CD4-positive, alpha-beta T cell (primary cell): ENCODE measurements at regions of chrX and their contacts with region 1.

Region 1: GRCh38 chrX:39445336-39445735 is 644.1 kb downstream of the MID1IP1 start:
- DNase-seq: peak; percentile 2 to 67 (median 29)
- ATAC-seq: no peak
- H3K4me3 ChIP-seq: no peak overlapping the region
- H3K4me3 Mint-ChIP-seq: no peak overlapping the region
- H3K27ac ChIP-seq: no peak overlapping the region
- H3K27ac Mint-ChIP-seq: no peak overlapping the region
- H3K4me1 ChIP-seq: peaks cover 6% of the 10 kb centered on the region
- H3K4me1 Mint-ChIP-seq: peaks cover 37% of the 10 kb centered on the region
- H3K27me3 ChIP-seq: no peaks in the 10 kb centered on the region
- H3K27me3 Mint-ChIP-seq: no peaks in the 10 kb centered on the region
- CTCF ChIP-seq: no peak

Region 2: GRCh38 chrX:39261446-39262147 is 183.7 kb before region 1 on chrX:
- CTCF ChIA-PET with region 1: no interaction called
- POLR2A ChIA-PET with region 1: no interaction called
- intact Hi-C with region 1: loop called (anchors 5 kb)
- DNase-seq: peak in 7 of 14 experiments; percentile 1 to 68 (median 50)
- ATAC-seq: peak; percentile 60
- H3K4me3 ChIP-seq: no peak overlapping the region
- H3K4me3 Mint-ChIP-seq: no peak overlapping the region
- H3K27ac ChIP-seq: no peak overlapping the region
- H3K27ac Mint-ChIP-seq: no peak overlapping the region
- H3K4me1 ChIP-seq: no peaks in the 10 kb centered on the region
- H3K4me1 Mint-ChIP-seq: peaks cover 11% of the 10 kb centered on the region
- H3K27me3 ChIP-seq: no peaks in the 10 kb centered on the region
- H3K27me3 Mint-ChIP-seq: no peaks in the 10 kb centered on the region
- CTCF ChIP-seq: peak; percentile 59

Region 3: DNA sequence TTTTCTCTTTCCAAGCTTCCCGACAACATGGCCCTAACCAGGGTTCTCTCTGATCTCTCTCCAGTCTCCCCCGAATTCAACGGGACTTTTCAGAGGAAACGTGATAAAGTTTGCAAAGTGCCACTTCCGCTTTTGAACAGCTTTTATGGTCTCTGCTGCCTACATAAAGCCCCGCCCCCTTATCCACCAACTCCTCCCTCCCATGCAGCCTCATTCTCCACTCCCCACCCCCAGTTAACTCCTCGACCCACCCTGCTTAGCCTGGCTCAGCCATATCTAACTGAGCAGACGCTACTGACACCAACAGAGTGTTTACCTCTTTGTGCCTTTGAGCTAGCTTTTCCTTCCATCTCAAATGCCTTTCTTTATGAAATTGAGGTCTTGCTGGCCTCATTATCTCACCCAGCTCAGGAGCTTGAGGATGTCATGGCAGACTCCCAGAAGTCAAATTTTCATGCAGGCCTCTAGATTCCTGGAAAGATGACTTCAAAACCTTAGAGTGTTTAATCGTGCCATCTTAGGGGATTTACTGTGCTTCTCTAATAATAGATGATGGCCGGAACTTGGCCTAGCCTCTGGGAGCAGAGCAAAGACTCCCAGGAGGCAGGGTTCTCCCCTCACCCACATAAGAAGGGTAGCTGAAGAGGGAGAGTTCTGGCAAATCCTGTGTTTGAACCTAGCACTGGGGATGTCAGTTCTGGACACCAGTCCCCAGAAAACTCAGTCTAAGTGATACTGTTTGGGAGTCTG is 46.4 kb after region 1 on chrX:
- CTCF ChIA-PET with region 1: no interaction called
- POLR2A ChIA-PET with region 1: no interaction called
- intact Hi-C with region 1: no loop called
- DNase-seq: peak; percentile 7 to 81 (median 44)
- ATAC-seq: peak; percentile 99
- H3K4me3 ChIP-seq: no peak overlapping the region
- H3K4me3 Mint-ChIP-seq: peak overlapping the region; percentile 71
- H3K27ac ChIP-seq: no peak overlapping the region
- H3K27ac Mint-ChIP-seq: peak overlapping the region; percentile 70
- H3K4me1 ChIP-seq: peaks cover 22% of the 10 kb centered on the region
- H3K4me1 Mint-ChIP-seq: peaks cover 27% of the 10 kb centered on the region
- H3K27me3 ChIP-seq: no peaks in the 10 kb centered on the region
- H3K27me3 Mint-ChIP-seq: no peaks in the 10 kb centered on the region
- CTCF ChIP-seq: no peak